ENCODE measurements at regions of chr19 and their contacts with region 1.

Region 1: GRCh38 chr19:40598121-40598917 is 2.9 kb upstream of the LTBP4 start:
- DNase-seq: peak; percentile 74
- H3K4me3 Mint-ChIP-seq: peak overlapping the region; percentile 39
- H3K27ac Mint-ChIP-seq: no peak overlapping the region
- H3K4me1 Mint-ChIP-seq: peaks cover 47% of the 10 kb centered on the region
- H3K27me3 Mint-ChIP-seq: peaks cover 41% of the 10 kb centered on the region

Region 2: DNA sequence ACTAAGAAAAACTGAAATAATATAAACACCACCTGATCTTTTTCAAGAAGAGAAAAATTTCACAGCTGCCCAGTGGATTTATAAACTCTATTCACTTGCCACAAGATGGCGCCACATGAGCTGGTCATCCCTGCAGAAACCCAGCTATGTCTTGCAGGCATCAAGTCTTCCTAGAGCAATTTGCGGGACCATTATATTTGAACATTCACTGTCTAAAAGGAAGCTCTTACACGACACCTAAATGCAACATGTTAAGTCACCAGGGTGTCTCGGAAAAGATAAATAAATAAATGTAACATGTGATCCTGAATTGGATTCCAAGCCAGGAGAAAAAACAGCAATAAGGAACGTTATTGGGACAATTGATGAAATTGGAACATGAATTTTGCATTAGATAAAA is 292.9 kb before region 1 on chr19:
- intact Hi-C with region 1: loop called (anchors 1 kb)
- DNase-seq: peak; percentile 59
- H3K4me3 Mint-ChIP-seq: no peak overlapping the region
- H3K27ac Mint-ChIP-seq: no peak overlapping the region
- H3K4me1 Mint-ChIP-seq: peaks cover 3% of the 10 kb centered on the region
- H3K27me3 Mint-ChIP-seq: no peaks in the 10 kb centered on the region

Region 3: GRCh38 chr19:40529093-40529954 is 69.0 kb before region 1 on chr19:
- intact Hi-C with region 1: loop called (anchors 1 kb)
- DNase-seq: peak; percentile 85
- H3K4me3 Mint-ChIP-seq: peak overlapping the region; percentile 61
- H3K27ac Mint-ChIP-seq: no peak overlapping the region
- H3K4me1 Mint-ChIP-seq: peaks cover 6% of the 10 kb centered on the region
- H3K27me3 Mint-ChIP-seq: peaks cover 23% of the 10 kb centered on the region

Region 4: GRCh38 chr19:40549007-40549708 is 49.2 kb before region 1 on chr19:
- intact Hi-C with region 1: loop called (anchors 1 kb)
- DNase-seq: peak; percentile 64
- H3K4me3 Mint-ChIP-seq: no peak overlapping the region
- H3K27ac Mint-ChIP-seq: no peak overlapping the region
- H3K4me1 Mint-ChIP-seq: peaks cover 11% of the 10 kb centered on the region
- H3K27me3 Mint-ChIP-seq: peaks cover 36% of the 10 kb centered on the region

Region 5: GRCh38 chr19:40576585-40577451 is 21.5 kb before region 1 on chr19 and contains the start of gene SHKBP1:
- intact Hi-C with region 1: loop called (anchors 1 kb)
- DNase-seq: peak; percentile 92
- H3K4me3 Mint-ChIP-seq: peak within 1 kb of the TSS; percentile 94
- H3K27ac Mint-ChIP-seq: peak within 1 kb of the TSS; percentile 78
- H3K4me1 Mint-ChIP-seq: peaks cover 11% of the 10 kb centered on the region
- H3K27me3 Mint-ChIP-seq: peaks cover 2% of the 10 kb centered on the region
- total RNA-seq, gene SHKBP1: 125 and 136 TPM in 2 replicates

Measured in activated T-helper 2 cell treated with anti-CD3 and anti-CD28 coated beads, Interferon-gamma antibody, Interleukin-2, Interleukin-4, amounts not matched to agents 10 μg/mL and 5 μg/mL and 100 μg/mL, durations not matched to agents 14 hours and 24 hours and 36 hours (primary cell).